Endothelial cell of umbilical vein (primary cell): ENCODE measurements at regions of chr7 and their contacts with region 1.

Region 1: DNA sequence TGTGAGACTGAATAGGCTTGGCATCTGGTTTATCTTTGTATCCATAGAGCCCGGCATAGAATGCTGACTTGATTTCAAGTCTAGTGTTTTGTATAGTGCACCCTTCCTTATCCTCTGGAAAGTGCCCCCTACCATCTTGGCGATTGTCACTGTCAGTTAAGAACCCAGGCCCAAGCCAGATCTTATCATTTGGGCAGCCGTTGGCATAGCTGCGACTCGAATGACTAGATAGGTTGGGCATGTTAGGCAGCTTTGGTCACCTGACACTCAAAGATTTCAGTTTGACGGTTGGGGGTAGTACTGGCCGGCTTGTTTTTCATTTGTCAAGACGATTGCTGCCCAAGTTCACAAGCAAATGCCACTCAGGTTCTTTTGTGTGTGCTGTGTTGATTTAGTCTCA is 6.6 kb downstream of the NIPSNAP2 start:
- DNase-seq: no peak
- H3K4me3 ChIP-seq: no peak overlapping the region
- H3K27ac ChIP-seq: no peak overlapping the region
- H3K4me1 ChIP-seq: no peaks in the 10 kb centered on the region
- H3K27me3 ChIP-seq: no peaks in the 10 kb centered on the region
- CTCF ChIP-seq: no peak
- POLR2A ChIP-seq: no peak

Region 2: DNA sequence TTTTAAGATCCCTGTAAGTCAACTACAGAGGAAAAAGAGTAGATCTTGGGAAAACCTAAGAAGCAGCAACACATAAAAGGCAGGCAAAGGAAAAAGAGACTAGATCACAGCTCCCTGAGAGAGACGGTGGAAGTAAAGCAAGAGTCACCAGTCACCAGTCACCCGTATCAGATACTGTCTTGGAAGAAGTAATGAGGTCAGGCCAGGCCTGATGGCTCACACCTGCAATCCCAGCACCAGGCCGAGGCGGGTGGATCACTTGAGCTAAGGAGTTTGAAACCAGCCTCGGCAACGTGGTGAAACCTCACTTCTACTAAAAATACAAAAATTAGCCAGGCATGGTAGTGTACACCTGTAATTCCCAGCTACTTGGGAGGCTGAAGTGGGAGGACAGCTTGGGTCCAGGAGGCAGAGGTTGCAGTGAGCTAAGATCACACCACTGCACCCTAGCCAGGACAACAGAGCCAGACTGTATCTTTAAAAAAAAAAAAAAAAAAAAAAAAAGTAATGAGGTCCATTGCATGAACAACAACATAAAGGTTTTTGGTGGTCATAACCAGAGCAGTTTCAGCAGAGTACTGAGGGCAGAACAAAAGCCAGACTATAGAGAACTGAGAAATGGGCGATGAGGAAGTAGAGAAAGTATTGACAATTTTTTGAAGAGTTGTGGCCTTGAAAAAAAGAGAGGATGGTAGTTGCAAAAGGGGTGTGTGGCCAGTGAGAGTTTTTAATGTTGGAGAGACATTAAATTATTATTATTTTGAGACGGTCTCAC is 66.8 kb before region 1 on chr7:
- CTCF ChIA-PET with region 1: no interaction called
- POLR2A ChIA-PET with region 1: interaction called, 11 read pairs
- dilution Hi-C with region 1: no loop called
- intact Hi-C with region 1: no loop called
- DNase-seq: no peak
- H3K4me3 ChIP-seq: no peak overlapping the region
- H3K27ac ChIP-seq: no peak overlapping the region
- H3K4me1 ChIP-seq: no peaks in the 10 kb centered on the region
- H3K27me3 ChIP-seq: no peaks in the 10 kb centered on the region
- CTCF ChIP-seq: no peak
- POLR2A ChIP-seq: no peak

Region 3: GRCh38 chr7:55951637-55952351 is 19.2 kb before region 1 on chr7 and contains the start of gene MRPS17:
- CTCF ChIA-PET with region 1: no interaction called
- POLR2A ChIA-PET with region 1: no interaction called
- dilution Hi-C with region 1: no loop called
- intact Hi-C with region 1: no loop called
- DNase-seq: peak; percentile 89
- H3K4me3 ChIP-seq: peak within 1 kb of the TSS; percentile 83 to 88 (median 84)
- H3K27ac ChIP-seq: peak within 1 kb of the TSS; percentile 55
- H3K4me1 ChIP-seq: no peaks in the 10 kb centered on the region
- H3K27me3 ChIP-seq: no peaks in the 10 kb centered on the region
- CTCF ChIP-seq: no peak
- POLR2A ChIP-seq: peak; percentile 79
- total RNA-seq, gene MRPS17: 19.5 TPM in 2 replicates